HEK293 (cell line): ENCODE measurements at regions of chr1 and their contacts with region 1.

Region 1: DNA sequence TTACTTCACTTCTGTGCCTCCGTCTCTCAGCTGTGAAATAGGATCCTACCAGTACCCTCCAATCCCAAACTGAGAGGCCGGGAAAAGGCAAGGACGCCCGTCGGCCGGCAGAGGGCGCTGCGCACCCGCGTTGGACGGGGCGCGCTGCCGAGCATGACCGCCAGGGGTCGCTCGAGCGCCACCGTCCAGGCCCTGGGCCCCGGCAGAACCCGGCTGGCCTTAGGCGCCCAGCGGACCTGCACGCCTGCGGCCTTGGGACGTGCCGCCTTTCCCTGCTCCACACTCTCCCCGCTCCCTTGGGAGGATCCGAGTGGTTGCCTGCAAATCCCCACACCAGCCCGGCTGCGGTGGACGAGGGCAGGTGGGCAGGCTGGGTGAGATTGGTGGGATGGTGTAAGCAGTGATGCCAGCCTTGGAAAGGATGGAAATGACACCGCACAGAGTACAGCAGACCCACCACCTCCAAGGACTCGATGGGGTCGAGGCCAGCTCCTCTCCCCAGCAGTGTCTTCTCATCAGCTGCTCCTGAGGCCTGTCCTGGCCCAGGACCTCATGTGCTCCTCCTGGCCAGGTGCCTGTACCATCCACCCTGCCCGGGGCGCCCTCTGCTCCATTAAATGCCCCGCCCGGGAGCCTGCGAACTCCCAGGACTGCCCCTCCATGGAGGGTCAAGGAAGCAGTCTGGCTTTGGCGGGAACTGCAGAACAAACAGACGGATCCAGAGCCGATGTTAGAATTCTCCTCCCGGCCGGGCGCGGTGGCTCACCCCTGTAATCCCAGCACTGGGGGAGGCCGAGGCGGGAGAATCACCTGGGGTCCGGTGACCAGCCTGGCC is 47.4 kb upstream of the LBR start:
- H3K4me3 ChIP-seq: no peak overlapping the region
- H3K27ac ChIP-seq: no peak overlapping the region; the same call in 1 of the 2 replicates
- H3K4me1 ChIP-seq: no peaks in the 10 kb centered on the region
- CTCF ChIP-seq: peak; percentile 100

Region 2: GRCh38 chr1:225250432-225250831 is 224.8 kb before region 1 on chr1:
- CTCF ChIA-PET with region 1: no interaction called
- POLR2A ChIA-PET with region 1: no interaction called
- H3K4me3 ChIP-seq: no peak overlapping the region
- H3K27ac ChIP-seq: no peak overlapping the region
- H3K4me1 ChIP-seq: no peaks in the 10 kb centered on the region
- CTCF ChIP-seq: no peak

Region 3: DNA sequence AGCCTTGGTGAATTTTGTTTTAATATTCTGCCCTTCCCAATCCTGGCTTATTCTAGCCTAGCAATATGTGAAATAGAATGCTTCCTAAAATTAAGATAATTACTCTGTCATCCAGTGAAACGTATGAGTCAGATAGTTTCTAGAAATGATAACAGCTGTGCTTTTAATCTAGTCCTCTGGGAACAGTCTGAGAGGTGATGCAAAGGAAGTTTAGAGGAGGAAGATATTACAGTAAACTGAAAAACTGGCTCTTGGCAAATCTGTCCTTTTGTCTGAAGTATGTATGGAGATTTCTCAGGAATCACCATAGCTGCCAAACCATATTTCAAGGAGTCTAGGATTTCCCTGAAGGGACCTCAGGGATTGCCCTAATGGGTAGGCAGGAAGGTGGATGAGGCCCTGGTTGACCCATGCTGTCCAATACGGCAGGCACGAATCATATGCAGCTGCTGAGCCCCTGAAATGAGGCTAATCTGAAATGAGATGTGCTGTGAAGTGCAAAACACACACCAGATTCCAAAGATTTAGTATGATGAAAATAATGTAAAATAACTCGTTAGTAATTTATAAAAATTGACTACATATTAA is 23.4 kb after region 1 on chr1:
- CTCF ChIA-PET with region 1: interaction called, 45 read pairs
- POLR2A ChIA-PET with region 1: no interaction called
- H3K4me3 ChIP-seq: no peak overlapping the region
- H3K27ac ChIP-seq: no peak overlapping the region
- H3K4me1 ChIP-seq: peaks cover 7% of the 10 kb centered on the region; the same call in 1 of the 2 replicates
- CTCF ChIP-seq: no peak

Region 4: DNA sequence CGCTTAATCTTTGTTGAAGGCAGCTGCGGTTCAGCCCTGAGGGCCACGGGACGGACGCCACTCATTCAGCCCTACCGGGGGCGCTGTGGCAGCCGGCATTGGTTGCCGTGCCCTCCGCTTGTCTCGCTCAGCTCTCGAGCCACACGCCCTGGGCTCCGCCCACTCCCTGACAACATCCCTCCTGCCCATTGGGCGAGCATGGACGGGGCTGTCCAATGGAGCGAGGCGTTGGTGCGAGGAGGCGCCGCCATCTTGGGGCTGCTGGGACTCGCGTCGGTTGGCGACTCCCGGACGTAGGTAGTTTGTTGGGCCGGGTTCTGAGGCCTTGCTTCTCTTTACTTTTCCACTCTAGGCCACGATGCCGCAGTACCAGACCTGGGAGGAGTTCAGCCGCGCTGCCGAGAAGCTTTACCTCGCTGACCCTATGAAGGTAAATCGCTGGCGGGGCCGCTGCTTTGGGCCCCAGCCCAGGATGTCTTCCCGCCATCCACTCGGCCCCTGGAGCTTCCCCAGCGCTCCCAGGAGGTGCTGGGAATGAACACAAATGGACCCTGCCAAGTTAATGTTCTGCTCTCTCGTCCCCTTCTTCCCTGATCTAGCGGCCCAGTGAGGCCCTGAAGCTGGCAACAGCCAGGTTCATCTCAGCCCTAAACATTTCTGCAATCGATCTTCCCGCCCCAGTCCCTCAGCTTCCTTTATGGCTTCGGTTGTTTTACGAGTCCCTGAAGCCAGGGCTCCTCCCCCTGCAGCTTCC is 302.6 kb after region 1 on chr1 and contains the start of gene SRP9:
- CTCF ChIA-PET with region 1: interaction called, 567 read pairs
- POLR2A ChIA-PET with region 1: interaction called, 5 read pairs
- H3K4me3 ChIP-seq: peak within 1 kb of the TSS; percentile 76
- H3K27ac ChIP-seq: peak within 1 kb of the TSS; percentile 95
- H3K4me1 ChIP-seq: peaks cover 12% of the 10 kb centered on the region
- CTCF ChIP-seq: peak; percentile 100

Region 5: DNA sequence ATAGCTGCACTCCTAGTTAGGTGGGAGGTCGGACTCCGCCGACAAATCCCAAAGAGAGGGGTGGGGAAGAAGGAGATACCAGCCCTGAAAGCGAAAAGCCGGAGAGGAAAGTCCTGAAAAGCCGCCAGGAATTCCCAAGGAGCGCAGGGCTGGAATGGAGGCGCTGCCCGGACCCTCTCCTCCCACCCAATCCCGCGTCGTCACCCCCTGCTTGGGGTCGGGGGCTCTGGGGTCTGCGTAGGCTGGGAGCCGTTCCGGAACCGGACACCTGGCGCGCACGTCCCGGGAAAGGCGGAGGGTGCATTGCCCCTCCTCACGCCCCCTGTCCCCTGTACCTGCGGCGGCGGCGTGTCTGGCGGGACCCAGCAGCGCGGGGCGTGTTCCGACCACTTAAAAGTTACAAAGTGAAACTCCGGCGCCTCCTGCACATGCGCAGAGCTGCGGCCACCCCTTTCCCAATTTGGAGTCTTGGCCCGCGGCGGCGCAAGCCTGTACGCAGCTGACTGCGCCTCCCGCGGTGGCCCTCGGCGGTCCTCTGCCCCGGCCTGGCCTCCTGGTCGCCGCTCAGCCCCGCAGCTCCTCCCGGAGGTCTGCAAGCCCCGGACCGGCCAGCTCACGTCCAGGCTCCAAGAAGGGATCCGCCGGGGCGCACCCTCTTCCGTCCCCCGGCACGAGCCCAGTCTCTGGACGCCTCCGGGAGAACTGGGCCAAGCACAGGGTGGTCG is 406.9 kb after region 1 on chr1 and contains the start of gene TMEM63A:
- CTCF ChIA-PET with region 1: interaction called, 13 read pairs
- POLR2A ChIA-PET with region 1: no interaction called
- H3K4me3 ChIP-seq: peak within 1 kb of the TSS; percentile 86
- H3K27ac ChIP-seq: peak within 1 kb of the TSS; percentile 76
- H3K4me1 ChIP-seq: no peaks in the 10 kb centered on the region; the same call in 1 of the 2 replicates
- CTCF ChIP-seq: peak; percentile 98

Region 6: DNA sequence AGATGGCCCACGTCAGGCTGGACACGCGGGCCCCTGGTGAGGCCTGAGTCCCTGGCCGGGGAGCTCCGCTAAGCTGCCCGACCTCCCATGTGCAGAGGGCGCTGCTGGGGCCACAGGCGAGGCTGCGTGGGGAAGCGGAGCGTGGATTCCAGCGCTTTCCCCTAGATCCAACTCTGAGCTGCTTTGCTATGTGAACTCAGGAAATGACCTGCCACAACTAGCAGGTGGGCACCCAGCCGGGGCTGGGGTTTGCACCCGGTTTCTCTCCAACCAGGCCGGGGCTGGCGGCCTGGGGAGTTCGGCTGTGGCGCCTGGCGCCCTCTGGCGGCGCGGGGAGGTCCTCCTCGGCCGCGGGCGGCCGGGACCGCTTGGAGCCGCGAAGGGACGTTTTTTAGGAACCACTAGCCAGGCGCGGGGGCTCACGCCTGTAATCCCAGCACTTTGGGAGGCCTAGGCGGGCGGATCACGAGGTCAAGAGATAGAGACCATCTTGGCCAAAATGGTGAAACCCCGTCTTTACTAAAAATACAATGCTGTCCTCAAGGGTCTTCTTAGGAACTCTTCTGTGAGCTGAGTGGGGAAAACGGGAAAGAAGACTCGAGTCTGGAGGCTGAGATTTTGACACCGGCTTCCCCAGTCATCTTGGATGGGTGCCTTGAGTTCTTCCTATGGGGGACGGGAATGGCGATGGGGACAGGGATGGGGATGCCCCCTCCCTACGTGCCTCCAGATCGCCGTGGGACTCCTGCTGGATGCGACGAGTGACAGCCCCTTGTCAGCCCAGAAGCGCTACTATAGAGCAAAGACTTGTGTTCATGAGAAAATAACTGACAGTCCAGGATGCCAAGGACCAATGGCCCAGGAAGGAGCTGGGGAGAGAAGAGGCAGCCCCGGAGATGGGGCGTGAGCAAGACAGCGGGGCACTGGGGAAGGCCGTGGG is 436.3 kb after region 1 on chr1:
- CTCF ChIA-PET with region 1: interaction called, 84 read pairs
- POLR2A ChIA-PET with region 1: no interaction called
- H3K4me3 ChIP-seq: no peak overlapping the region
- H3K27ac ChIP-seq: no peak overlapping the region
- H3K4me1 ChIP-seq: no peaks in the 10 kb centered on the region
- CTCF ChIP-seq: no peak

Region 7: GRCh38 chr1:225977937-225978748 is 502.9 kb after region 1 on chr1:
- CTCF ChIA-PET with region 1: interaction called, 161 read pairs
- POLR2A ChIA-PET with region 1: interaction called, 3 read pairs
- H3K4me3 ChIP-seq: no peak overlapping the region
- H3K27ac ChIP-seq: no peak overlapping the region
- H3K4me1 ChIP-seq: no peaks in the 10 kb centered on the region
- CTCF ChIP-seq: no peak